HAP-1 (cell line): ENCODE measurements at regions of chr2 and their contacts with region 1.

Region 1: DNA sequence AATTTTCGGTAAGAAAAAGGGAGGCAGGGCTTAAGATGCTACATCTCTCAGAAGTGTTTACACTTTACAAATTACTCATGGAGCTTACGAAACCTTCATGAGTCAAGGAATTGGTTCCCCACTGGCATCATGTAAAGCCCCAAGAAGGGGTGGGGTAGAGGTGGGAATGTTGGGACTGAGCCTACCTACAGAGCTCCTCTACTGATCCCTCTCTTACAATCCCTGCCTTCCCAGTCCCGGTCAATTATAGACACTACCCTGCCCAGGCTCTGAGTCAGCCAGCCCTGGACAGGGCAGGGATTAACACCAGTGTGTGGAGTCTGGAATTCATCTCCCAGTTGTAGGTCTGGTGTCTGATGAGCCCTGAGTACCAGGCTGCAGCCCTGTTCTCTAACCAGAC is 248.9 kb downstream of the PAX3 start:
- DNase-seq: no peak
- H3K4me3 ChIP-seq: no peak overlapping the region
- H3K4me1 ChIP-seq: no peaks in the 10 kb centered on the region
- H3K27me3 ChIP-seq: peaks cover 16% of the 10 kb centered on the region

Region 2: DNA sequence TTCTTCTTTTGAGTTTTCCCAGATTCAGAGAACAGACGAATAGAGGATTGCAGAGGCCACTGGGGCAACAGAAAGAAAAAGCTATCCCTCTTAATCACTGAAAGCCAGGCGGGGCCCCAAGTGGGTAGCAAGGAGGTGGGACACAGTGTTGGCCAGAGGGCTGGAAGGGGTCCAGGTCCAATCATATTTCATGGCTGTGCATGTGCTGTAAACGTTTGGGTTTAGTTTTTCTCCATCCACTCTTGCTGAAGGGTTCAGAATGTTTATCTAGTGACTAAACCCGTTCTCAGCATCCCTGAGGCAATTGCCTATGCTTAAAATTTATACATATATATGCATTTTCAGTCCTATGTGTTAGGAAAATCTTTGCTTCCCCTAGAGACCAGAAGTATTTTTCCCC is 378.4 kb before region 1 on chr2:
- in situ Hi-C with region 1: no loop called
- DNase-seq: no peak
- H3K4me3 ChIP-seq: no peak overlapping the region
- H3K4me1 ChIP-seq: peaks cover 14% of the 10 kb centered on the region
- H3K27me3 ChIP-seq: no peaks in the 10 kb centered on the region

Region 3: DNA sequence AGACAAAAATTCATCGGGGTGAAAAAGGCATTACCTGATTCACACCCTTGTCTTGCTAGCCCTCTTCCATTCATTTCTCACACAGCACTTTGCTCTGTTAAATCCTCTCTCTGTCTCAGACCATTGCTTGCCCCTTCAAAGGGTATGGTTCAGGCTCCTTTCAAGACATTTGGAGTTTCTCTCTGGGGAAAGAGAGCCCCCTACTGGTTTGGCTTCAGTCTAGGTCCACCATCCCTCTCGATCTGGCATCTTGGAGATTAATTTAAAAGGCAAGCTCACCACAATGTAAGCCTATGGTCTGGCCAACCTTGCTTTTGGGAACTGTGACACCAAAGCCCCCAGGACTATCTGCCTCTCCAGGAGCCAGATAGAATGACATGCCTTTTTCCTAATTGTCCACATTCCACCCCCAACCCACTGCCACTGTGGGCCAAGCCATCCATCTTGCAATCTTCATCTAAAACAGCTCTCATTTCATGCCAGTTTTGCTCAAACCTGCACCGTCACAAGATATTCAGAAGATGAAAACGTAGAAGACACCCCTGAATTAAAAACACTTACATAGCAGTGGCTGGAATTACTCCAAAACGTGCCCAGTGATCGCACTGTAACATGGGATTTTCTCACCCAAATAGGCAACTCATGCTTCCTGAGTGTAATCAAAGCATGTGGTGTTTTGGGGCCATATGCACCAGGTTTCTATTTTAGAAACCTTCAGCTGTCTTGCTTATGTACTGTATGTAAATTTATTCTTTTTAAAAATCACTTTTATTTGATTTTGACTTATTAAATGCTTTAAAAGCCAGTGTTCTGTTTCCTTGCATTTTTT is 512.1 kb after region 1 on chr2:
- in situ Hi-C with region 1: loop called (anchors 10 kb)
- DNase-seq: peak; percentile 48 to 69
- H3K4me3 ChIP-seq: no peak overlapping the region
- H3K4me1 ChIP-seq: no peaks in the 10 kb centered on the region
- H3K27me3 ChIP-seq: no peaks in the 10 kb centered on the region